ENCODE measurements at regions of chr7 and their contacts with region 1.

Region 1: DNA sequence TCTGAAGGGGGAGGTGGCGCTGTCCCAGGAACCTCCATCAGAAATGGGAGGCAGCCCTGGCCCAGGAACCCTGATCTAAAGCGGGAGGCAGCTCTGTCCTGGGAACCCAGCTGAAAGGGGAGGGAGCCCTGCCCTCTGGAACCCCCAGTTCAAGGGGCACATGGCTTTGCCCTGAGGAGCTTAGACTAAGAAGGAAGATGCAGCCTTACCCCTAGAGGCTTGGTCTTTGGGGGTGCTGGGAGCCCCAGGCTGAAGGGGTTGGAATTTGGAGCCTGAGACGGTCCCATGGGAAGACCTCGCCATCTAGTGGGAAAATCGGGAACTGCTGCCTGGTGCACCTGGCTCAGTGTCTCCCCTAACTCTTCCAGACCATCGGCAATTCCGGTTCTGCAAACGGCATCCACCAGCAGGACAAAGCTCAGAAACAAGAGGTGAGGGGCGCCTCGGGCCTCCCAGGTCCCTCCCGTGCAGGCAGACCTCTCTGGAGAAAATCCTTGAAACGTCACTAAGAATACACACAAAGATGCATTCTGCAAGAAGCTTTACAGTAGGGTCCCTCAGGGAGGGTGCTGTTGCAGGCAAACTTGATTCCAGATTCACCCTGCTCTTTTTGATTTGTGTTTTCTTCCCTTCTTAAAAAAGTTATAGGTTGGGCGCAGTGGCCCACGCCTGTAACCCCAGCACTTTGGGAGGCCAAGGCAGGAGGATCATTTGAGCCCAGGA is 52.4 kb upstream of the GTF2IRD1 start:
- DNase-seq: peak; percentile 71
- H3K4me3 Mint-ChIP-seq: no peak overlapping the region
- H3K27ac Mint-ChIP-seq: no peak overlapping the region
- H3K4me1 Mint-ChIP-seq: no peaks in the 10 kb centered on the region
- H3K27me3 Mint-ChIP-seq: no peaks in the 10 kb centered on the region
- CTCF ChIP-seq: peak; percentile 89

Region 2: GRCh38 chr7:74068393-74069085 is 332.8 kb before region 1 on chr7:
- CTCF ChIA-PET with region 1: no interaction called
- intact Hi-C with region 1: loop called (anchors 5 kb)
- DNase-seq: no peak
- H3K4me3 Mint-ChIP-seq: no peak overlapping the region
- H3K27ac Mint-ChIP-seq: no peak overlapping the region
- H3K4me1 Mint-ChIP-seq: no peaks in the 10 kb centered on the region
- H3K27me3 Mint-ChIP-seq: no peaks in the 10 kb centered on the region
- CTCF ChIP-seq: no peak

Region 3: DNA sequence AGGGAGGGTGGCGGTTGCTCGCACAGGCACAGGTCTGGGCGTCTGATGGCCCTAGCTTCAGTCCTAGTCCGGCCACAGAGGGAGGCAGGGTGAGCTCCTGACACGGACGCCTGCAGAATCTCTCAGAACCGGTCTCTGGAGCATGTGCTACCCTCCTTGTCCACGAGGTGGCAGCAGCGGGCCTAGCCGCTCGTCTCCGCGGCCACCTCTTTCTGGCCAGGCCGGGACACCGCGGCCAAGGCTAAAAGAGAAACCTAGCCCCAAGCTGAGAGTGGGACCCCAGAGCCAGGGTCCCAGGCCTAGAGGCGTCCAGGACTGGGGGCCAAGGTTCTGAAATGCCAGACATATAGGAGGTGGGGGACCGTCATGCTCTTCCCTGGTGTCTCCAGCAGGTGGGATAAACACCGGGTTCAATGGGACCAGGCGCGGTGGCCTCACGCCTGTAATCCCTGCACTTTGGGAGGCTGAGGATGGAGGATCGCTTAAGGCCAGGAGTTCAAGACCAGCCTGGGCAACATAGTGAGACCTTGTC is 194.6 kb before region 1 on chr7:
- CTCF ChIA-PET with region 1: interaction called, 35 read pairs
- intact Hi-C with region 1: loop called (anchors 1 kb)
- DNase-seq: peak; percentile 85
- H3K4me3 Mint-ChIP-seq: no peak overlapping the region
- H3K27ac Mint-ChIP-seq: no peak overlapping the region
- H3K4me1 Mint-ChIP-seq: peaks cover 10% of the 10 kb centered on the region
- H3K27me3 Mint-ChIP-seq: peaks cover 14% of the 10 kb centered on the region
- CTCF ChIP-seq: peak; percentile 85